AG04450 (cell line): ENCODE measurements at regions of chr1 and their contacts with region 1.

Region 1: GRCh38 chr1:28437934-28438699 is 67.7 kb upstream of the RCC1 start:
- DNase-seq: peak; percentile 90
- H3K4me3 ChIP-seq: peak overlapping the region; percentile 44
- H3K27ac ChIP-seq: peak overlapping the region; percentile 71
- H3K27me3 ChIP-seq: no peaks in the 10 kb centered on the region
- CTCF ChIP-seq: no peak

Region 2: GRCh38 chr1:28235755-28236655 is 202.1 kb before region 1 on chr1 and contains the start of gene ATP5IF1:
- CTCF ChIA-PET with region 1: no interaction called
- POLR2A ChIA-PET with region 1: no interaction called
- DNase-seq: peak; percentile 96
- H3K4me3 ChIP-seq: peak within 1 kb of the TSS; percentile 100
- H3K27ac ChIP-seq: peak within 1 kb of the TSS; percentile 65
- H3K27me3 ChIP-seq: no peaks in the 10 kb centered on the region
- CTCF ChIP-seq: no peak
- polyA plus RNA-seq, gene ATP5IF1: 151 and 189 TPM in 2 replicates

Region 3: DNA sequence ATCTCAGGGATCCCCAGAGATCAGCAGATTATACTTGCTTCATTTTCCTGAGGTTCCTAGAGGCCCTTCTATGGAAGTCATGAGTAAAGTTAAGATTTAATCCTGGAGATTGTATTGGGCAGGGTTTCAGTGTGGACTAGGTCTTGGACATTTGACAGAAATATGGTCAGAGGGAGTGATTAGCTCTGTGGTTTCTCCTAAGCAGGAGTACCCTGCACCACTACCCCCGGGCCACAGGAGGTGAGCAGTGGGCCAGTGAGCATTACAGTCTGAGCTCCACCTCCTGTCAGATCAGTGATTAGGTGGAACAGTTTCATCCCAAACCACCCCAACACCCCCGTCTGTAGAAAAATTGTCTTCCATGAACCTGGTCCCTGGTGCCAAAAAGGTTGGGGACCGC is 25.4 kb before region 1 on chr1:
- CTCF ChIA-PET with region 1: interaction called, 11 read pairs
- POLR2A ChIA-PET with region 1: no interaction called
- DNase-seq: no peak
- H3K4me3 ChIP-seq: no peak overlapping the region
- H3K27ac ChIP-seq: no peak overlapping the region
- H3K27me3 ChIP-seq: no peaks in the 10 kb centered on the region
- CTCF ChIP-seq: no peak

Region 4: GRCh38 chr1:28505406-28506187 is 67.5 kb after region 1 on chr1 and contains the start of gene RCC1:
- CTCF ChIA-PET with region 1: no interaction called
- POLR2A ChIA-PET with region 1: interaction called, 15 read pairs
- DNase-seq: peak; percentile 98
- H3K4me3 ChIP-seq: peak within 1 kb of the TSS; percentile 95
- H3K27ac ChIP-seq: peak within 1 kb of the TSS; percentile 89
- H3K27me3 ChIP-seq: no peaks in the 10 kb centered on the region
- CTCF ChIP-seq: 0 out of 2 replicates have a peak, but pooled peaks have one; percentile 4
- polyA plus RNA-seq, gene RCC1: 22.4 and 24.0 TPM in 2 replicates

Region 5: GRCh38 chr1:28540651-28541050 is 102.5 kb after region 1 on chr1:
- CTCF ChIA-PET with region 1: no interaction called
- POLR2A ChIA-PET with region 1: no interaction called
- DNase-seq: no peak
- H3K4me3 ChIP-seq: no peak overlapping the region
- H3K27ac ChIP-seq: no peak overlapping the region
- H3K27me3 ChIP-seq: no peaks in the 10 kb centered on the region
- CTCF ChIP-seq: 0 out of 2 replicates have a peak, but pooled peaks have one; percentile 9